Thyroid gland (tissue), 4 donors: ENCODE measurements at regions of chr17 and their contacts with region 1.

Region 1: GRCh38 chr17:5281814-5282653 is at the start of gene RABEP1:
- DNase-seq: peak; percentile 87 to 93
- H3K4me3 ChIP-seq: peak within 1 kb of the TSS in 2 of 3 donors; percentile 82 to 87
- H3K27ac ChIP-seq: peak within 1 kb of the TSS; percentile 45 to 75 (median 58)
- H3K4me1 ChIP-seq: peaks cover 12 to 14% of the 10 kb centered on the region in 2 donors
- H3K27me3 ChIP-seq: no peaks in the 10 kb centered on the region
- CTCF ChIP-seq: peak in 3 of 6 experiments; percentile 13 to 30 (median 22)
- POLR2A ChIP-seq: peak in 1 of 2 donors; percentile 89
- total RNA-seq, gene RABEP1: 36.0 to 57.7 (median 40.9) TPM

Region 2: DNA sequence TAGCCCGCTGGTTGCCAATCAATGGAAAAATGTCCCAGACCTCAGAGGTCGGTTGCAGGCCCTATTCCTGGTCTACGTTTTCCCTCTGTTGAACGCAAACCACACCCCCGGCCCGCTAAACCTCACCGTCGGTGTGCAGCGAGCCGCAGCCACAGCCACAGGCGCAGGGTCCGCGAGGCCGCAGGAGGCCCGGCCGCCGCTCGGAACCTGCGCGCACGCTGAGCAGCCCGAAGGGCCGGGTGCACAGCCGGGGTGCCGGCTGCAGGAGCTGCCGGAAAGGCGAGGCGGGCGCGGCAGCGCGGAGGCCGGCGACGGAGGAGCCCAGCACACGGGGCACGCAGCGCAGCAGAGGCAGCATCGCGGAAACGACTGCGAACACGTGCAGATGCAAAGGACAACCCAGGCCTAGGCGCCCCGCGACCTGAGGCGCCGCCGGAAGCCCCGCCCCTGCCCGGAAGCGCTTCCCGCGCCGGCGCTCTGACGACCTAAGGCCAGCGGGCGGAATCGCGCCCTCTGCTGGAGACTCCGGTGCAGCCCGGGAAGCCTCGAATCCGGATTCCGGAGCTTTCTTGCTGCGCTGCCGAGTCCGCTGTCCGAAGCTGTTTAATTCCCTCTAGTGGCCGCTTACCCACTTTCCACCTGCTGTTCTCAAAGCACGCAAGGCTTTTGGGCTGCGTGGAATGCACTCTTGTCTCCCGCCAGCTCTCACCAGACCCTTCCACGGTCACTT is 156.8 kb after region 1 on chr17 and contains the start of gene C1QBP:
- intact Hi-C with region 1: loop called (anchors 10 kb)
- DNase-seq: peak; percentile 89 to 92
- H3K4me3 ChIP-seq: peak within 1 kb of the TSS; percentile 43 to 92 (median 59)
- H3K27ac ChIP-seq: peak within 1 kb of the TSS; percentile 46 to 50 (median 49)
- H3K4me1 ChIP-seq: peaks cover 10% of the 10 kb centered on the region in 2 donors
- H3K27me3 ChIP-seq: no peaks in the 10 kb centered on the region
- CTCF ChIP-seq: peak; percentile 96 to 100 (median 98)
- POLR2A ChIP-seq: peak in 1 of 2 donors; percentile 65
- total RNA-seq, gene C1QBP: 75.4 to 143 (median 113) TPM